Keratinocyte (primary cell): ENCODE measurements at regions of chr2 and their contacts with region 1.

Region 1: DNA sequence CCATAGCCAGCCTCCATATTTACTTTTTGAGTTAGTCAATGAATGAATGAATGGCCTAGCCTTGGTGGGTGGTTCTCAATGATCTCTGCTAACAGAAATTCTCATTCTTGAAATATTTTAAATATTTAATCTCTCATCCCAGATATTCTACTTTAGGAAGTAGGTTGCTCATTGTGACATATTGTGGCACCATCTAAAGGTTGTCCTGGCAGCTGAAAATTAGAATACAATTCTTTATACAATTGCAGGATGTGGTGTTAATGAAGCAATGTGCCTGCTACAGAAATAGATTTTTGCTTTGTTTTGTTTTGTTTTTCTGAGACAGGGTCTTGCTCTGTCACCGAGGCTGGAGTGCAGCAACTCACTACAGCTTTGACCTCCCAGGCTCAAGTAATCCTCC is 35.8 kb downstream of the SCG2 start:
- DNase-seq: no peak
- H3K4me3 ChIP-seq: no peak overlapping the region
- H3K27ac ChIP-seq: no peak overlapping the region
- H3K4me1 ChIP-seq: peaks cover 23% of the 10 kb centered on the region
- H3K27me3 ChIP-seq: no peaks in the 10 kb centered on the region
- CTCF ChIP-seq: no peak

Region 2: GRCh38 chr2:223508372-223508771 is 58.0 kb before region 1 on chr2:
- dilution Hi-C with region 1: loop called (anchors 5 kb)
- DNase-seq: no peak
- H3K4me3 ChIP-seq: no peak overlapping the region
- H3K27ac ChIP-seq: no peak overlapping the region
- H3K4me1 ChIP-seq: peaks cover 2% of the 10 kb centered on the region
- H3K27me3 ChIP-seq: no peaks in the 10 kb centered on the region
- CTCF ChIP-seq: no peak

Region 3: DNA sequence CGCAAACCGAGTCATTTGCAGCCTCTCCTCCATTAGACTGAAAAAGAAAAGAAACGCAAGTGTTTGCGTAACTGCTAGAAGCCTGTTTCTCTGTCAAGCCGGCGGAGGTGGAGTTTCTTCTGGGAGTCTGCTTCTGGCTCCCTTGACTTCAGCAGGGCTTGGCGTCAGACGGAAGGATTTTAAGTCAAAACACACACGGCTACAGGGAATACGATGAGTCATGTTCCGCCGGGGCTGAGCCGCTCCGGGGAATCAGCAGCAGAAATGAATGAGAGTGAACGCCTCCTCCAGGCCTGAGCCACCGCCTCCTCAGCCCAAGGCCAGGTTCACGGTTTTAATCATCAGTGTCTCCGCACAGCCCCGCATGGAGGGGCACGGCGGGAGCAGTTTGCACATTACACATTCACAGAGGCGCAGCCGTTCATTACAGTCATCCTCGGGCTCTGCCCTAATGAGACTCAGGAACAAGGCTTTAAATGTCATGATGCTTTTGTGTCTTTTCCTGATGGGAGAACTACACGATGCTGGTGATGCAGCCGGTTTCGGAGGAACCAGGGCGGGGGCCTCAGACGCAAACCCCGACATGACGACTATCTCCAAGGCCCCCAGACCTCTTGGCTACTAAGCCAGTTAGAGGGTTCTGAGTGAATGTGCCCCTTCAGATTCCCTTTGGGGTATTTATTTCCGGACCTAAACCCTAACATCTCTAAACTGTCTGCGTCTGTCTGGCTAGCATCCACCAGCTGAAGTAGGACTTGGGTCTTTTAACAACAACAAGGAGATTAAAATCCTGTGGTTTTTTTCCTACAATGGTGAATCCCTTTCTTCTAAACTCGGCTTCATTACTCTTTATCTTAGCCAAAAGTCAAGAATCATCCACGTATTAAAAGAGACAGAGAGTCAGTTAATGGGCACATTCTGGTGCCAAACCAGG is 46.9 kb after region 1 on chr2:
- dilution Hi-C with region 1: no loop called
- DNase-seq: peak; percentile 38
- H3K4me3 ChIP-seq: peak overlapping the region in 2 of 3 experiments; percentile 2 to 55
- H3K27ac ChIP-seq: peak overlapping the region; percentile 25
- H3K4me1 ChIP-seq: peaks cover 7% of the 10 kb centered on the region
- H3K27me3 ChIP-seq: no peaks in the 10 kb centered on the region
- CTCF ChIP-seq: no peak